AG04450 (cell line): ENCODE measurements at regions of chr2 and their contacts with region 1.

Region 1: DNA sequence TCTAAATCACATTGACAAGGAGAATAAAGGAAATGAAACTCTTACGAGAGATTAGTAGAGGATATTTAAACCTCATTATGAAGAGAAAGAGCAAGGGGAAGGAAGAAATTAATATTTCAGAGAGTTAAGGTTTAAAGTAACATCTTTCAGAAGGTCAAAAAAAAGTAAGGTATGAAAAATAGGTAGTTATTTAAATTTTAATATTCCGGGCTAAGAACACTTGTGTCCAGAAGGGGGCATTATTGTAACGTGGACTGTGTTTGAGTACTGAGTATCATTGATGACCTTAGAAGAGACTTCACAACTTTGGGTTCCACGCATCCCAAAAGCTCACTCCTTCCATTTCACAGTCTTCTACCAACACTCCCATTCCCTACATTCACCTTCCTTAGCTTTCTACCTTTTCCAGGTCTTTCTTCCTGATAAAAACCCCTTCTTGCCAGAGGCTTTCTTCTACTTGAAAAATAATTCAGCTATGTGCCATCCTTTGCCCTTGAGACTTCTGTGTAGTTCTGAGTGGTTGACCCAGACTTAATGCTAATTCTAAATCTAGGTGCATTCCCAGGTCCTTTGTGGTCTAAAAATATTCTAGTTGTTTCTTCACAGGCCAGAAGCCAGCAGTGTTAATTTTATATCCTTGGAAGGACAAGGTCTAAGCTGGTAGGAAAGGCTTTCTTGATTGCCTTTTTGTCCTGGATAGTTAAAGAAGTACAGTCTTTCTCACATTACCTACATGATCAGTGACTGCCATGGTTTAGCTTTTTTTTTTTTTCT is 16.5 kb downstream of the DYNC1I2 start:
- DNase-seq: no peak
- H3K4me3 ChIP-seq: no peak overlapping the region
- H3K27ac ChIP-seq: no peak overlapping the region
- H3K27me3 ChIP-seq: no peaks in the 10 kb centered on the region
- CTCF ChIP-seq: peak; percentile 65

Region 2: DNA sequence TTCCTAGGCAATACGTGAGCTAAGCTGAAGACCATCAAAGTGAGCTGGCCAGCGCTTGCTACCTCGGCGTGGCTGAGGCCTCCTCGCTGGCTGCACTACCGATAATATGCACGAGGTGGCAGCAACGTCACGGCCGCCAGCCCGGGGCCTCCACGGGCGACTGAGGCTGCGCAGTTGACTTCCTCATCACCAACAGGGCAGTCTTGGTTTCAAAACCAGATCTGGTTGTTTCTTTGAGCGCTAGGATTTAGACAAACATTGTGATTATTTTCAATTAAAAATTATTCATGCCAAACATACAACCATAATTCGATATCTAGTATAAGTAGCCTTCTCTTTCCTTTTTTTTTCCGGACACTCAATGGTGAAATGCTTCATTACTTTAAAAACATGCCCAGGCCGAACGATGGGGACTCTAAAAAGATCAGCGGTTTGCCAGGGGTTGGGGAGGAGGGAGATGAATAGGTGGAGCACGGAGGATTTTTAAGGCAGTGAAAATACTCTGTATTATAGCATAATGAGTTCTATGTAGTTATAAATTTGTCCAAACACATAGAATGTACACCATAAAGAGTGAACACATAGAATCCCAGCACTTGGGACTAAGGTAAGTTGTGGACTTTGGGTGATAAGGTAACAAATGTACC is 129.5 kb before region 1 on chr2:
- CTCF ChIA-PET with region 1: interaction called, 12 read pairs
- POLR2A ChIA-PET with region 1: no interaction called
- DNase-seq: peak; percentile 15
- H3K4me3 ChIP-seq: no peak overlapping the region
- H3K27ac ChIP-seq: no peak overlapping the region
- H3K27me3 ChIP-seq: peaks cover 4% of the 10 kb centered on the region
- CTCF ChIP-seq: peak; percentile 95

Region 3: GRCh38 chr2:171652416-171652785 is 51.4 kb before region 1 on chr2:
- CTCF ChIA-PET with region 1: no interaction called
- POLR2A ChIA-PET with region 1: no interaction called
- DNase-seq: no peak
- H3K4me3 ChIP-seq: no peak overlapping the region
- H3K27ac ChIP-seq: no peak overlapping the region
- H3K27me3 ChIP-seq: peaks cover 4% of the 10 kb centered on the region
- CTCF ChIP-seq: no peak

Region 4: GRCh38 chr2:171687287-171688128 is 16.3 kb before region 1 on chr2 and contains the start of gene DYNC1I2:
- CTCF ChIA-PET with region 1: interaction called, 34 read pairs
- POLR2A ChIA-PET with region 1: no interaction called
- DNase-seq: peak; percentile 88
- H3K4me3 ChIP-seq: peak within 1 kb of the TSS; percentile 88
- H3K27ac ChIP-seq: peak within 1 kb of the TSS; percentile 87
- H3K27me3 ChIP-seq: peaks cover 2% of the 10 kb centered on the region
- CTCF ChIP-seq: no peak
- polyA plus RNA-seq, gene DYNC1I2: 176 and 228 TPM in 2 replicates

Region 5: GRCh38 chr2:171723724-171724683 is 20.2 kb after region 1 on chr2:
- CTCF ChIA-PET with region 1: interaction called, 14 read pairs
- POLR2A ChIA-PET with region 1: no interaction called
- DNase-seq: no peak
- H3K4me3 ChIP-seq: no peak overlapping the region
- H3K27ac ChIP-seq: no peak overlapping the region
- H3K27me3 ChIP-seq: no peaks in the 10 kb centered on the region
- CTCF ChIP-seq: peak; percentile 31

Region 6: DNA sequence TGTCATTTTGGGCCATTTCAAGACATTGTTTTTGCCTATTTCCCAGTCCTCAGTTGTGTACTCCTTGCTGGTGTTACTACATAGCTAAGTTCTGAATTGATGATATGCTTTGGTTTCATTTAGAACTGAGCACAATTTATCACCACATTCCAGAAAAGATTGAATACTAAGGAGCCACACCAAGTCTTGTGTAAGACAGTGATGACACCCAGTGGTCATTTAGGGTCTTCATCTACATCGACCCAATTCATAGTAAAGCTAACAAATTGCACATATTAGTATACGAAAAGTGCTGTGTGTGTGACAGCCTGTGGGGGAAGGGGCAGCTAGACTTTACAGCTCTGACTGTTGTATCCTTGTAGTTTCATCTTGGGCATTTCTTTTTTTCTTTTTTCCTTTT is 409.9 kb after region 1 on chr2:
- CTCF ChIA-PET with region 1: interaction called, 22 read pairs
- POLR2A ChIA-PET with region 1: no interaction called
- DNase-seq: no peak
- H3K4me3 ChIP-seq: no peak overlapping the region
- H3K27ac ChIP-seq: no peak overlapping the region
- H3K27me3 ChIP-seq: no peaks in the 10 kb centered on the region
- CTCF ChIP-seq: peak; percentile 39